Breast epithelium (tissue), 4 donors: ENCODE measurements at regions of chr19 and their contacts with region 1.

Region 1: DNA sequence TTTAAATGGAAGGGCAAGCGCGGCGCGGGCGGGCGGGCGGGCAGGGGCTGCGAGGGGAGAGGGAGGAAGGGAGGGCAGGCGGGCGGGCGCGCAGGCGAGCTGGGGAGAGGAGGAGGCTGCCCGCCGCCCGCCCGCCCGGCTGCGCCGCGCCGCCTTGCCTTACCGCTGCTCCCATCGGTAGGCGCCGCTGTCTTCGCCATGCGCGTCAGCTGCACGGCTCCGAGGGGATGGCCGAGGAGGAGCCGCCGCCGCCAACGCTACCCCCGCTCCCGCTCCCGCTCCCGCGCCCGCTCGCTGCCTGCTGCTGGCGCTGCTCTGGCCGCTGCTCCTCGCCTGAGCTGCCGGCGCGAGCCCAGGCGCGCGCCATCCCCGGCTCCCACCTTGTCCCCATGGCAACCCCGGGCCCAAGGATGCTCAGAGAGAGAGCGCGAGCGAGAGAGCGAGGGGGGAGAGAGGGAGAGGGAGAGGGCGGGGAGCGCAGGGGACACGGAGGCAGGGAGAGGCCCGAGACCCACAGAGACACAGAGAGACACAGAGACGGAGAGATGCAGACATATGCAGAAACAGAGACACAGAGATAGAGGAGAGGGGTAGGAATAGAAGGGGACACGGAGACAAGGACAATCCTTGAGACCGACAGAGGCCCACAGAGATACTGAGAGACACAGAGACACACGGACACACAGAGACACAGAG is 40.3 kb downstream of the DEDD2 start:
- DNase-seq: peak; percentile 42 to 61
- H3K4me3 ChIP-seq: peak overlapping the region; percentile 30 to 66 (median 50)
- H3K27ac ChIP-seq: no peak overlapping the region
- H3K4me1 ChIP-seq: peaks cover 0 to 6% of the 10 kb centered on the region in 2 donors
- H3K27me3 ChIP-seq: peaks cover 2 to 65% of the 10 kb centered on the region in 2 donors
- CTCF ChIP-seq: no peak
- POLR2A ChIP-seq: no peak

Region 2: GRCh38 chr19:42148266-42148665 is 28.9 kb before region 1 on chr19:
- intact Hi-C with region 1: loop called (anchors 1 kb)
- DNase-seq: no peak
- H3K4me3 ChIP-seq: no peak overlapping the region
- H3K27ac ChIP-seq: no peak overlapping the region
- H3K4me1 ChIP-seq: no peaks in the 10 kb centered on the region
- H3K27me3 ChIP-seq: peaks cover 0 to 28% of the 10 kb centered on the region in 2 donors
- CTCF ChIP-seq: no peak
- POLR2A ChIP-seq: no peak

Region 3: DNA sequence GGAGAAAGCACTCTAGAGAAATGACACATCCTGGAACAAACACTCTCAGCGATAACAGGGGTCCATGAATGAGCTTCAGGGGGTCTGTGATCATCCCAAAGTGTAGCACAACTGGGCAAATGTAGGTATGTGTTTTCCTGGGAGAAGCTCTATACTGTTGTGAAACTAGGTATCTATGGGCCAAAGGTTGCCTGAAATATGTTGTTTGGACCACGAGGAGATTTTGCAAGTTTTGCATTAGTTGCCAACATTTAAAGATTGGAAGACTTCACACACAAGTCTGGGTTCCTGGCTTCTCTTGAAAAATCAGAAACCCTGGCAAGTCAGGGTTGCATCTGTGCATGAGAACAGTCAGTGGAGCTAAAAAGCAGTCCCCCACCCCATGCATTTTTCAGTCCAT is 18.2 kb before region 1 on chr19:
- intact Hi-C with region 1: loop called (anchors 1 kb)
- DNase-seq: no peak
- H3K4me3 ChIP-seq: no peak overlapping the region
- H3K27ac ChIP-seq: no peak overlapping the region
- H3K4me1 ChIP-seq: no peaks in the 10 kb centered on the region
- H3K27me3 ChIP-seq: peaks cover 0 to 5% of the 10 kb centered on the region in 2 donors
- CTCF ChIP-seq: no peak
- POLR2A ChIP-seq: no peak